Endothelial cell of umbilical vein (primary cell): ENCODE measurements at regions of chr5 and their contacts with region 1.

Region 1: GRCh38 chr5:64147849-64148441 is 17.7 kb upstream of the RNF180 start:
- DNase-seq: peak; percentile 60
- H3K4me3 ChIP-seq: no peak overlapping the region
- H3K27ac ChIP-seq: no peak overlapping the region
- H3K4me1 ChIP-seq: peaks cover 6% of the 10 kb centered on the region
- H3K27me3 ChIP-seq: peaks cover 0 to 6% of the 10 kb centered on the region in 2 experiments
- CTCF ChIP-seq: peak; percentile 70 to 73
- POLR2A ChIP-seq: no peak

Region 2: GRCh38 chr5:63555874-63556273 is 592.1 kb before region 1 on chr5:
- CTCF ChIA-PET with region 1: no interaction called
- POLR2A ChIA-PET with region 1: no interaction called
- dilution Hi-C with region 1: no loop called
- intact Hi-C with region 1: no loop called
- DNase-seq: no peak
- H3K4me3 ChIP-seq: no peak overlapping the region
- H3K27ac ChIP-seq: no peak overlapping the region
- H3K4me1 ChIP-seq: no peaks in the 10 kb centered on the region
- H3K27me3 ChIP-seq: no peaks in the 10 kb centered on the region
- CTCF ChIP-seq: no peak
- POLR2A ChIP-seq: no peak

Region 3: GRCh38 chr5:64165500-64166200 is 17.7 kb after region 1 on chr5 and contains the start of gene RNF180:
- CTCF ChIA-PET with region 1: interaction called, 10 read pairs
- POLR2A ChIA-PET with region 1: no interaction called
- dilution Hi-C with region 1: no loop called
- intact Hi-C with region 1: no loop called
- DNase-seq: peak; percentile 39
- H3K4me3 ChIP-seq: peak within 1 kb of the TSS; percentile 67 to 88 (median 77)
- H3K27ac ChIP-seq: no peak within 1 kb of the TSS
- H3K4me1 ChIP-seq: peaks cover 6% of the 10 kb centered on the region
- H3K27me3 ChIP-seq: peaks cover 13 to 18% of the 10 kb centered on the region in 2 experiments
- CTCF ChIP-seq: no peak
- POLR2A ChIP-seq: no peak
- total RNA-seq, gene RNF180: 3.4 and 5.6 TPM in 2 replicates

Region 4: DNA sequence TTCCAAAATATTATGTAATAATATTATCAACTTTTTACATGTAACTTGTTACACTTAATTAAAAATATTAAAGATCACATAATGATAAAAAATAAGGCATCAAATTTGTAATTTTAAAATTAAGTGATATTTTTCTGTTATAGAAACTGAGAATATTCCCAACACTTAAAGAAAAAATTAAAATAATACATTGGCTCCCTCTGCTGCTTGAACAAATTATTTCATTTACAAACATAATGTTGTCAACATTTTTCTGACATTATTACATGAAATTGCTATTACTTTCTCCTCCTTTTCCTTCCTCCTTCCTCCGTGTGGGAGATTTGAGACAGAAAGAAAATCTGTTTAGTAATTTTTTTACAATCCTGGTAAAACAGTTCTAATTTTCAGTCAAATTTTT is 60.0 kb after region 1 on chr5:
- CTCF ChIA-PET with region 1: interaction called, 103 read pairs
- POLR2A ChIA-PET with region 1: no interaction called
- dilution Hi-C with region 1: no loop called
- intact Hi-C with region 1: loop called (anchors 1 kb)
- DNase-seq: peak; percentile 40
- H3K4me3 ChIP-seq: no peak overlapping the region
- H3K27ac ChIP-seq: no peak overlapping the region
- H3K4me1 ChIP-seq: peaks cover 16% of the 10 kb centered on the region
- H3K27me3 ChIP-seq: no peaks in the 10 kb centered on the region
- CTCF ChIP-seq: no peak
- POLR2A ChIP-seq: no peak

Region 5: GRCh38 chr5:64213531-64213930 is 65.6 kb after region 1 on chr5:
- CTCF ChIA-PET with region 1: interaction called, 103 read pairs
- POLR2A ChIA-PET with region 1: no interaction called
- dilution Hi-C with region 1: no loop called
- intact Hi-C with region 1: loop called (anchors 1 kb)
- DNase-seq: no peak
- H3K4me3 ChIP-seq: no peak overlapping the region
- H3K27ac ChIP-seq: no peak overlapping the region
- H3K4me1 ChIP-seq: peaks cover 19% of the 10 kb centered on the region
- H3K27me3 ChIP-seq: no peaks in the 10 kb centered on the region
- CTCF ChIP-seq: no peak
- POLR2A ChIP-seq: no peak

Region 6: GRCh38 chr5:64229163-64229774 is 81.3 kb after region 1 on chr5:
- CTCF ChIA-PET with region 1: interaction called, 11 read pairs
- POLR2A ChIA-PET with region 1: no interaction called
- dilution Hi-C with region 1: no loop called
- intact Hi-C with region 1: no loop called
- DNase-seq: peak; percentile 49
- H3K4me3 ChIP-seq: no peak overlapping the region
- H3K27ac ChIP-seq: no peak overlapping the region
- H3K4me1 ChIP-seq: no peaks in the 10 kb centered on the region
- H3K27me3 ChIP-seq: no peaks in the 10 kb centered on the region
- CTCF ChIP-seq: peak; percentile 24 to 41
- POLR2A ChIP-seq: no peak

Region 7: GRCh38 chr5:64784451-64785025 is 636.6 kb after region 1 on chr5:
- CTCF ChIA-PET with region 1: interaction called, 4 read pairs
- POLR2A ChIA-PET with region 1: no interaction called
- dilution Hi-C with region 1: no loop called
- intact Hi-C with region 1: loop called (anchors 2 kb)
- DNase-seq: peak; percentile 76
- H3K4me3 ChIP-seq: no peak overlapping the region
- H3K27ac ChIP-seq: no peak overlapping the region
- H3K4me1 ChIP-seq: peaks cover 6% of the 10 kb centered on the region
- H3K27me3 ChIP-seq: no peaks in the 10 kb centered on the region
- CTCF ChIP-seq: peak; percentile 62 to 72
- POLR2A ChIP-seq: no peak